ENCODE measurements at regions of chr20 and their contacts with region 1.

Region 1: DNA sequence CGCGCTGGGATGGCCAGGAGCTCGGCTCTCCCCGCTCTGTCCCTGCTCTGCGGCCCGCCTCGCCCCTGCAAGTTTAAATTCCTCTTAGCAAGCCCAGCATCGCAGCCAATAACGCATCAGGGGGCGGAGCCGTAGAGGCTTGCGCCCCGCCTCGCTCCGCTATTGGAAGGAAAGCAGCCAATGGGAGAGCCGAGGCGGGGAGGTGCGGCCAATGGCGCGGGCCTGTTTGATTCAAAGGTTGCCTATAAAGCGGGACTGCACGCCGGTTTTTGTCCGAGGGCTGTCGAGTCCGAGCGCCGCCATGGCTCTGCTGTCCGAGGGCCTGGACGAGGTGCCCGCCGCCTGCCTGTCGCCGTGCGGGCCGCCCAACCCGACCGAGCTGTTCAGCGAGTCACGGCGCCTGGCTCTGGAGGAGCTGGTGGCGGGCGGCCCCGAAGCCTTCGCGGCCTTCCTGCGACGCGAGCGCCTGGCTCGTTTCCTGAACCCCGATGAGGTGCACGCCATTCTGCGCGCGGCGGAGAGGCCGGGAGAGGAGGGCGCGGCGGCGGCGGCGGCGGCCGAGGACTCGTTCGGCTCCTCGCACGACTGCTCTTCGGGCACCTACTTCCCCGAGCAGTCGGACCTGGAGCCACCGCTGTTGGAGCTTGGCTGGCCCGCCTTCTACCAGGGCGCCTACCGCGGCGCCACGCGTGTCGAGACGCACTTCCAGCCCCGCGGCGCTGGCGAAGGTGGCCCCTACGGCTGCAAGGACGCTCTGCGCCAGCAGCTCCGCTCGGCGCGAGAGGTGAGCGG is at the start of gene FAM83D:
- DNase-seq: peak; percentile 87
- H3K4me3 ChIP-seq: peak within 1 kb of the TSS; percentile 79
- CTCF ChIP-seq: no peak

Region 2: GRCh38 chr20:38941726-38942389 is 15.5 kb after region 1 on chr20:
- CTCF ChIA-PET with region 1: interaction called, 31 read pairs
- POLR2A ChIA-PET with region 1: no interaction called
- DNase-seq: no peak
- H3K4me3 ChIP-seq: no peak overlapping the region
- CTCF ChIP-seq: no peak

Region 3: DNA sequence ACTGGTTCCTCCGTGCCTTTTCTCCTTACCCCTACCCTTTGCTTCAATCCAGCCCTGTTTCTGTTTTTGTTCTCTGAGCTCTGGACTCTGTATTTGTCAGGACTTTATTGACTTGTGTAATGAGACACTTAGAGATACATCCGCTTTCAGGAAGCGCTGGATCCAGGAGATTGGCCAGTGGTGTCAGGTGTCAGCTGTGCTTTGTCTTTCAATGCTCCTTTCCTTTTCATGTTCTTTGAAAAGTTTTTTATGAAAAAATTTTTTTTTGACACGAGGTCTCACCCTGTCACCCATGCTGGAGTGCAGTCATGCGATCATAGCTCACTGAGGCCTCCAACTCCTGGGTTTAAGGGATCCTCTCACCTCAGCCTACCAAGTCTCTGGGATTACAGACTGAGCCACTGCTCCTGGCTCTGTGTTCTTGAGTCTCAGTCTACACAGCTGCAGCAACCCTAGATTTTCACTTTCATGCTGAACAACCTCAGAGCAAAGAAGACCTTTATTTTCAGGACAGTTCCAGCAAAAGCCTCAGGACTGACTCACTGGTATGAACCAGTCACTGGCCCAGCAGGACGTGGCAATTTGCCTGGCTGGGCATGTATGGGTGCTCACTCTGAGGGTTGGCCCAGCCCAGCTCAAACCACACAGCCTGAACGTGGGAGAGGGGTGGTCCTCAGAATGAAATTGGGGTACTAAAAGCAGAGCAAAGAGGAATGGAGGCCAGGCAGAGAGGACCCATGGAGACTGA is 144.3 kb after region 1 on chr20:
- CTCF ChIA-PET with region 1: no interaction called
- POLR2A ChIA-PET with region 1: no interaction called
- DNase-seq: peak; percentile 33
- H3K4me3 ChIP-seq: no peak overlapping the region
- CTCF ChIP-seq: no peak

Measured in AG04449 (cell line).